ENCODE measurements at regions of chr16 and their contacts with region 1.

Region 1: GRCh38 chr16:57091975-57092785 is at the start of gene CPNE2:
- DNase-seq: peak in 1 of 2 experiments; percentile 72
- H3K4me3 ChIP-seq: peak within 1 kb of the TSS; percentile 53 to 92 (median 62)
- H3K27ac ChIP-seq: no peak within 1 kb of the TSS; the same call in 1 of the 2 replicates
- H3K4me1 ChIP-seq: peaks cover 0 to 10% (median 3%) of the 10 kb centered on the region in 4 experiments; a peak in 5 of 7 replicates
- H3K27me3 ChIP-seq: peaks cover 0 to 20% (median 13%) of the 10 kb centered on the region in 4 experiments; a peak in 6 of 7 replicates
- CTCF ChIP-seq: no peak; a peak in 1 of 4 replicates
- EP300 ChIP-seq: no peak
- POLR2A ChIP-seq: no peak
- RAD21 ChIP-seq: no peak
- total RNA-seq, gene CPNE2: 10.6 and 11.6 TPM in 2 replicates

Region 2: DNA sequence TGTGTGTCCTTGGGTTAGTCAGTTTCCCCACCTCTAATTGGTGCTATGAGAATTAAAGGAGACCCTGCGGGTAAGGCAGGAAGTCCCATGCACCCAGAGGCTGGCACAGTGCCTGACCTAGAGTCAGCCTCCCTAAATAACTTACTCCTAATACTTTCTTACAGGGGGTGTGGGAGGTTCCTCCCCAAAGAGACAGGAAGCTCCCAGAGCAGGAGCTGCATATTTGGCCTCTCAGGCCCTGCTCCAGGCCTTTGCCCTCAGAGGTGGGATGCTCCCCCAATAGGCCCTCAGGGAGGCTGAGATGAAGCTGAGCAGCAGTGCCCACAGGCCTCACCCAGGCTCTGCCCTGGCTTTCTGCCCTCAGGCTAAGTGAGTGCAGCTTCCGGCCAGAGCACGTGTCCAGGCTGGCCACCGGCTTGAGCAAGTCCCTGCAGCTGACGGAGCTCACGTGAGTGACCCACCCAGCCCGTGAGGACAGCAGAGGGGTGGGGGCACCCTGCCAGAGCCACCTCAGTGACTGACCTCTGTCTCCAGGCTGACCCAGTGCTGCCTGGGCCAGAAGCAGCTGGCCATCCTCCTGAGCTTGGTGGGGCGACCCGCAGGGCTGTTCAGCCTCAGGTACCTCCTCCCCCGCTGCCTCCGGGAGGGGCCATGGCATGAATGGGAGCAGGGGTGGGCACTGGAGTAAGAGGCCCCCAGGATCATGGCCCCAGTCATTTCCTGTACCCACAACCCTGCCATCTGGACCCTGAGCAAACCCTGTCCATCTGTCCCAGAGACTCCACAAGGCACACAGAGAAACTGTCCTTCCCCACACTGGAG is 30.9 kb before region 1 on chr16:
- CTCF ChIA-PET with region 1: no interaction called
- POLR2A ChIA-PET with region 1: no interaction called
- DNase-seq: no peak
- H3K4me3 ChIP-seq: no peak overlapping the region
- H3K27ac ChIP-seq: no peak overlapping the region
- H3K4me1 ChIP-seq: peaks cover 0 to 4% (median 2%) of the 10 kb centered on the region in 4 experiments; a peak in 2 of 7 replicates
- H3K27me3 ChIP-seq: no peaks in the 10 kb centered on the region
- CTCF ChIP-seq: no peak
- EP300 ChIP-seq: no peak
- POLR2A ChIP-seq: no peak
- RAD21 ChIP-seq: no peak

Region 3: GRCh38 chr16:57106767-57107166 is 14.6 kb after region 1 on chr16:
- CTCF ChIA-PET with region 1: interaction called, 100 read pairs
- POLR2A ChIA-PET with region 1: no interaction called
- DNase-seq: no peak
- H3K4me3 ChIP-seq: no peak overlapping the region
- H3K27ac ChIP-seq: no peak overlapping the region
- H3K4me1 ChIP-seq: peaks cover 3 to 13% (median 9%) of the 10 kb centered on the region in 4 experiments
- H3K27me3 ChIP-seq: no peaks in the 10 kb centered on the region
- CTCF ChIP-seq: no peak
- EP300 ChIP-seq: no peak
- POLR2A ChIP-seq: no peak
- RAD21 ChIP-seq: no peak

Region 4: GRCh38 chr16:57115514-57116182 is 23.5 kb after region 1 on chr16:
- CTCF ChIA-PET with region 1: interaction called, 13 read pairs
- POLR2A ChIA-PET with region 1: no interaction called
- DNase-seq: no peak
- H3K4me3 ChIP-seq: no peak overlapping the region
- H3K27ac ChIP-seq: no peak overlapping the region
- H3K4me1 ChIP-seq: peaks cover 0 to 13% (median 4%) of the 10 kb centered on the region in 4 experiments; a peak in 4 of 7 replicates
- H3K27me3 ChIP-seq: no peaks in the 10 kb centered on the region
- CTCF ChIP-seq: no peak
- EP300 ChIP-seq: no peak
- POLR2A ChIP-seq: no peak
- RAD21 ChIP-seq: no peak

Region 5: DNA sequence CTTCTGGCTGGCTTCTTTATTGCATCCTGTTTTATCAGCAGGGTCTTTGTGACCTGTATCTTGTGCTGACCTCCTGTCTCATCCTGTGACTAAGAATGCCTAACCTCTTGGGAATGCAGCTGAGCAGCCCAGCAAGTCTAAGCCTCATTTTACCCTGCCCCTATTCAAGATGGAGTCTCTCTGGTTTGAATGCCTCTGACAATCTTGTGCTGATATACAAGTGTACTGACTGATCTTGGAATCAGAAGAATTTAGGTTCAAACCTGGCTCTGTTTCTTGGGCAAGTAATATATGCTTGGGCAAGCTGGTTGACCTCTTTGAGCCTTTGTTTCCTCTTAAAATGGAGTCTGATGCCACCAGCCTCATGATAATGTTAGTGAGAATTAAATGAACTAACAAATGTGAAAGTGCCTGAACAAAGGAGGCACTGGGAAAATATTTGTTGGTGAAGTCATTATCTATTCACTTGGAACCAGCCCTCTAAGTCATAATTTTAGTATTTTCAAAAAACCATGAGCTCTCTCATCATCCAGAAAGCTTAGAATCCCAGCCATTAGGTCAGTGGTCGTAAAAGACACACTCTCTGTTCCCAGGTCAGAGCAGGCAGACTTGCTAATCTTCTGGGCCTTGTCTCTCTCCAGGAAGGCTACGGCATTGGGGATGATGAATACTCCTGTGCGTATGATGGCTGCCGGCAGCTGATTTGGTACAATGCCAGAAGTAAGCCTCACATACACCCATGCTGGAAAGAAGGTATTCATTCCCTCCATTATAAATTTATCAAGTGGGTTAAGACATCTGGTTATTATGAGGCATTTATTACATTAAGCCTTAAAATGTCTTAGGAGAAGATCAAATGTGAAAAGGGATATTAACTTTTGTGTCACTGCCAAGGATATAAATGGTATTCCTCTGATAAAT is 134.8 kb after region 1 on chr16:
- CTCF ChIA-PET with region 1: no interaction called
- POLR2A ChIA-PET with region 1: no interaction called
- DNase-seq: no peak
- H3K4me3 ChIP-seq: no peak overlapping the region
- H3K27ac ChIP-seq: no peak overlapping the region
- H3K4me1 ChIP-seq: no peaks in the 10 kb centered on the region
- H3K27me3 ChIP-seq: no peaks in the 10 kb centered on the region
- CTCF ChIP-seq: no peak
- EP300 ChIP-seq: no peak
- POLR2A ChIP-seq: no peak
- RAD21 ChIP-seq: no peak

Measured in H1 (cell line).